Calu3 (cell line): ENCODE measurements at regions of chr7 and their contacts with region 1.

Region 1: DNA sequence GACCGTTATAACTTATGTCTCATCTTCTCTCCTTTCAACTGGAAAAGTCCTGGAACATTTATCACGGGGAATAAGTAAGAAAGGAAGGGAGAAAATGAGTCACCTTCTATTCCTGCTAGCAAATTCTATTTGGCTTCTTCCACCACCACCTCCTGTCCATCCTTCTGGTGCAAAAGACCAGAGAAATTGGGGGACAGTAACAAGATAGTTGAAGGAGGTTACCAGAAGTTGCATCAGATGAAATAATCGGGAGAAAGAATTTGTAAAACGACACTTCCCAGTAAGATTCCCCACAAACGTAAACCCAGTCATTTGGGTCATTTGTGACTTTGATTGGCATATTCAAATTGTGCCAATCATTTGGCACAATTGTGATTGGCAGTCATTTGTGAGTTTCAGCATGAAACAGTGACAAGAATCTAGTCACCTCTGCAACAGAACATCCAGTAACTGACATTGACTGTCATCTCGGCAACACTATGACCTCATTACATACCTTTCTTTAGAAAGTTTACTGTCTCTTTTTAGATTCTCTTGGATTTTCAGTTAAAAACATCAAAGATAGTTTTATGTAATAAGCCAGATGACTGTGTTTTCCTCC is 51.3 kb upstream of the PIK3CG start:
- DNase-seq: no peak
- H3K4me3 Mint-ChIP-seq: no peak overlapping the region
- H3K27ac Mint-ChIP-seq: no peak overlapping the region
- H3K4me1 Mint-ChIP-seq: peaks cover 8% of the 10 kb centered on the region
- H3K27me3 Mint-ChIP-seq: no peaks in the 10 kb centered on the region
- CTCF ChIP-seq: no peak

Region 2: DNA sequence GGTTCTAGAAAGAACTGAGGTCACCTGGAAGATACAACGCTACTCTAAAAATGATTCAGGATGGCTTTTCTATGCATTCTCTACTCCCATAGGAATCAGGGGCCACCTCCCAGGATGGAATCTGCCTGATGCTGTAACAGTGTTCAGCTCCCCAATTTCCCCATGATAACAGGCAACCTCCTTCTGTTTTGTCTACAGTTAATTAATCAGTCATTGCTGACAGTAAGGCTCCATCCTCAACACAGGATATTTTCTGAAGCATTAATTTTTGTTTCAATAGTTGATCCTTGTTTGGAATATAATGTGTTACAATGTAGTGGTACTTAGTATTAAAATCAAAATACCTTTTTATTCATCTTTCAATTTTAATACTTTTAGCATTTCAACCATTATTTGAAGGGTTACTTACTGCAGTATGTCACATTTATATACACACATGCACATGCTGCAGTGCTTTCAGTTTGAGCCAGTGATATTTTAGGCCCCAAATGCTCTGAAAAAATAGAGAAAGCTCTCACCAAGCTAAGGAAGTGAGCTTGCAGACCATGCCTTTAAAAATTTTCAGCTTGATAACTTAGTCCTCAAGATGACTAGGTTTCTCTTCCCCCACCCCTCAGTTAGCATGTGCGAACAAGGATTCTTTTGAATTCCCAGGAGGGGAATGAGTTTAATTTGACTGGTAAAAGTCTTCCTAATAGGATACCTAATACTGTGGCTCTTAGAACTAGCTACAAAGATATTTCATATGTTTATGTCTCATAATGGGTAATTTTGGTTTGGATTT is 50.7 kb after region 1 on chr7:
- CTCF ChIA-PET with region 1: interaction called, 10 read pairs
- intact Hi-C with region 1: no loop called
- DNase-seq: no peak
- H3K4me3 Mint-ChIP-seq: no peak overlapping the region
- H3K27ac Mint-ChIP-seq: no peak overlapping the region
- H3K4me1 Mint-ChIP-seq: peaks cover 15% of the 10 kb centered on the region
- H3K27me3 Mint-ChIP-seq: no peaks in the 10 kb centered on the region
- CTCF ChIP-seq: no peak